GM12878 (cell line): ENCODE measurements at regions of chr6 and their contacts with region 1.

Region 1: GRCh38 chr6:136792410-136793262 is at the start of gene MAP3K5:
- DNase-seq: no peak
- ATAC-seq: peak; percentile 76
- H3K4me3 ChIP-seq: peak within 1 kb of the TSS; percentile 71
- H3K27ac ChIP-seq: peak within 1 kb of the TSS; percentile 98
- H3K4me1 ChIP-seq: peaks cover 6% of the 10 kb centered on the region
- H3K27me3 ChIP-seq: no peaks in the 10 kb centered on the region
- CTCF ChIP-seq: peak; percentile 79 to 91 (median 84)
- EP300 ChIP-seq: peak in 1 of 2 experiments; percentile 4; a peak in 1 of 4 replicates
- POLR2A ChIP-seq: peak; percentile 87
- RAD21 ChIP-seq: peak; percentile 98
- polyA plus RNA-seq, gene MAP3K5: 5.4 to 11.1 TPM

Region 2: GRCh38 chr6:136593748-136594490 is 198.7 kb before region 1 on chr6:
- CTCF ChIA-PET with region 1: interaction called, 14 read pairs
- POLR2A ChIA-PET with region 1: interaction called, 7 read pairs
- RAD21 ChIA-PET with region 1: interaction called, 21 read pairs
- SMC1A ChIA-PET with region 1: interaction called, 7 read pairs
- in situ Hi-C with region 1: no loop called
- intact Hi-C with region 1: loop called (anchors 5 kb)
- DNase-seq: peak; percentile 94
- ATAC-seq: peak; percentile 97
- H3K4me3 ChIP-seq: 0 out of 2 replicates have a peak overlapping the region, but pooled peaks have one; percentile 20
- H3K27ac ChIP-seq: peak overlapping the region; percentile 83
- H3K4me1 ChIP-seq: peaks cover 13% of the 10 kb centered on the region; the same call in 1 of the 2 replicates
- H3K27me3 ChIP-seq: no peaks in the 10 kb centered on the region
- CTCF ChIP-seq: no peak
- EP300 ChIP-seq: peak in 1 of 2 experiments; percentile 55; a peak in 2 of 4 replicates
- POLR2A ChIP-seq: 0 out of 2 replicates have a peak, but pooled peaks have one; percentile 39
- RAD21 ChIP-seq: no peak

Region 3: DNA sequence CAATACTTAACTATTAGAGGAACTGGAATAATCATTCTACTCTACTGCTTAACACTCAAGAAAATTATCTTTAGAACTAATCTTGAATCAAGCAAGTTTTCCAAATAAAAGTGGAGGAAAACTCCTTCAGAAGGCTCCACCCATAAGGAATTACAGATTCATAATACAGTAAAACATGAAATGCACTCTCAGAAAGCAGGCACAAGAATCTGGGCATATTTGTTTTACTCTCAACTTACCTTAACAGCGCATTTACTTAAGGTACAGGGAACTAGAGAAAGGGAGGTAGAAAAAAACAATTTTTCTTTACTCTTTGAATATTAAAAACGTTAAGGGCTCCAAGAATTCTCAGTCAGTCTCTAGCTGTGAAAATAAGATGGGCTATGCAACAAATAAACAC is 140.7 kb before region 1 on chr6:
- CTCF ChIA-PET with region 1: interaction called, 411 read pairs
- POLR2A ChIA-PET with region 1: interaction called, 3 read pairs
- RAD21 ChIA-PET with region 1: interaction called, 296 read pairs
- SMC1A ChIA-PET with region 1: interaction called, 275 read pairs
- in situ Hi-C with region 1: no loop called
- intact Hi-C with region 1: no loop called
- DNase-seq: no peak
- ATAC-seq: no peak
- H3K4me3 ChIP-seq: no peak overlapping the region
- H3K27ac ChIP-seq: no peak overlapping the region
- H3K4me1 ChIP-seq: no peaks in the 10 kb centered on the region
- H3K27me3 ChIP-seq: no peaks in the 10 kb centered on the region
- CTCF ChIP-seq: no peak
- EP300 ChIP-seq: no peak
- POLR2A ChIP-seq: no peak
- RAD21 ChIP-seq: no peak

Region 4: GRCh38 chr6:136696238-136696637 is 96.4 kb before region 1 on chr6:
- CTCF ChIA-PET with region 1: interaction called, 6 read pairs
- POLR2A ChIA-PET with region 1: interaction called, 5 read pairs
- RAD21 ChIA-PET with region 1: interaction called, 10 read pairs
- SMC1A ChIA-PET with region 1: interaction called, 4 read pairs
- in situ Hi-C with region 1: no loop called
- intact Hi-C with region 1: no loop called
- DNase-seq: no peak
- ATAC-seq: no peak
- H3K4me3 ChIP-seq: no peak overlapping the region
- H3K27ac ChIP-seq: no peak overlapping the region
- H3K4me1 ChIP-seq: no peaks in the 10 kb centered on the region
- H3K27me3 ChIP-seq: no peaks in the 10 kb centered on the region
- CTCF ChIP-seq: no peak
- EP300 ChIP-seq: no peak
- POLR2A ChIP-seq: no peak
- RAD21 ChIP-seq: no peak

Region 5: DNA sequence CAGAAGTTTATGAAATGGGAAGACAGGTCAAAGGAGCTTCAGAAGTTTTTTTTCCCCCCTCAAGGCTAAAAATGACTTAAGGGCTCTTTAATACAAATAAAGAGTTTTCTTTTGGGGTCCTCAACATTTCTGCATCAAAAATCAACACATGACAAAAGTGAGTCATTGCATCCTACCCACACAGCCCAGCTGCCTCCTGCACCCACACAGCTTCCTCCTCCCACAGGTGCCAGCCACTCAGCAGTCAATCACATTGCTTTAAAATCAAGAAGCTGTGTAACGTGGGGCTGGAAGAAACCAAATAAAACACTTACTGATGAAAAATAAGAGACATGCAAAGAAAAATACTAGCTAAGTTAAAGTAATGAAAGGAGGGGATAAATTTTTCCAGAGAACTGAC is 68.9 kb before region 1 on chr6:
- CTCF ChIA-PET with region 1: interaction called, 136 read pairs
- POLR2A ChIA-PET with region 1: interaction called, 265 read pairs
- RAD21 ChIA-PET with region 1: interaction called, 405 read pairs
- SMC1A ChIA-PET with region 1: interaction called, 446 read pairs
- in situ Hi-C with region 1: loop called (anchors 5 kb)
- intact Hi-C with region 1: loop called (anchors 1 kb)
- DNase-seq: peak; percentile 53
- ATAC-seq: peak; percentile 64
- H3K4me3 ChIP-seq: no peak overlapping the region
- H3K27ac ChIP-seq: peak overlapping the region; percentile 30
- H3K4me1 ChIP-seq: peaks cover 20% of the 10 kb centered on the region
- H3K27me3 ChIP-seq: no peaks in the 10 kb centered on the region
- CTCF ChIP-seq: no peak
- EP300 ChIP-seq: no peak
- POLR2A ChIP-seq: no peak
- RAD21 ChIP-seq: no peak

Region 6: DNA sequence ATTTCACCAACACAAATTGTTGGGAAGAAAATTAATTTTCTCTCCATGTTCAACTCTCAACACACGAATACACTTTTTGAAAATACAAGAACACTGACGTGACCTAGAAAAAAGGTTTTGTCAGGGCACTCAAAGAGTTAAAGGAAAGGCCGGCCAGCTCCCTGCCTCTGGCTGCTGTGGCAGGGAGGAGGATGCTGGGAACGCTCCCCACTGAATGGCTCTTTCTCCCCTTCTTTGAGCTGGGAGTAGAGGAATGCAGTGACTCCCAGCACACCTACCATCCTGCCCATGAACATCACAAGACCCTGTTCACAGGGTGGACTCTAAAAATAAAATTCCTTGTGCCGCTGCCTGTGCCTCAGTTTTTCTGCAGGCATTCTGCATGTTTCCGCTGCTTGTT is 47.3 kb before region 1 on chr6:
- CTCF ChIA-PET with region 1: interaction called, 34 read pairs
- POLR2A ChIA-PET with region 1: interaction called, 5 read pairs
- RAD21 ChIA-PET with region 1: interaction called, 56 read pairs
- SMC1A ChIA-PET with region 1: interaction called, 48 read pairs
- in situ Hi-C with region 1: no loop called
- intact Hi-C with region 1: no loop called
- DNase-seq: no peak
- ATAC-seq: no peak
- H3K4me3 ChIP-seq: no peak overlapping the region
- H3K27ac ChIP-seq: no peak overlapping the region
- H3K4me1 ChIP-seq: peaks cover 24% of the 10 kb centered on the region
- H3K27me3 ChIP-seq: no peaks in the 10 kb centered on the region
- CTCF ChIP-seq: no peak
- EP300 ChIP-seq: no peak
- POLR2A ChIP-seq: no peak
- RAD21 ChIP-seq: no peak

Region 7: GRCh38 chr6:136772685-136773472 is 19.8 kb before region 1 on chr6:
- CTCF ChIA-PET with region 1: interaction called, 26 read pairs
- POLR2A ChIA-PET with region 1: interaction called, 159 read pairs
- RAD21 ChIA-PET with region 1: interaction called, 270 read pairs
- SMC1A ChIA-PET with region 1: interaction called, 227 read pairs
- in situ Hi-C with region 1: no loop called
- intact Hi-C with region 1: loop called (anchors 1 kb)
- DNase-seq: peak; percentile 93
- ATAC-seq: peak; percentile 75
- H3K4me3 ChIP-seq: peak overlapping the region; percentile 49
- H3K27ac ChIP-seq: peak overlapping the region; percentile 92
- H3K4me1 ChIP-seq: peaks cover 57% of the 10 kb centered on the region
- H3K27me3 ChIP-seq: no peaks in the 10 kb centered on the region
- CTCF ChIP-seq: no peak
- EP300 ChIP-seq: peak; percentile 50 to 93; a peak in 3 of 4 replicates
- POLR2A ChIP-seq: peak; percentile 38; the same call in 1 of the 2 replicates
- RAD21 ChIP-seq: no peak; the same call in 1 of the 2 replicates

Region 8: GRCh38 chr6:136930528-136930927 is 137.9 kb after region 1 on chr6:
- CTCF ChIA-PET with region 1: no interaction called
- POLR2A ChIA-PET with region 1: no interaction called
- RAD21 ChIA-PET with region 1: no interaction called
- SMC1A ChIA-PET with region 1: no interaction called
- in situ Hi-C with region 1: no loop called
- intact Hi-C with region 1: no loop called
- DNase-seq: no peak
- ATAC-seq: no peak
- H3K4me3 ChIP-seq: no peak overlapping the region
- H3K27ac ChIP-seq: no peak overlapping the region
- H3K4me1 ChIP-seq: no peaks in the 10 kb centered on the region
- H3K27me3 ChIP-seq: no peaks in the 10 kb centered on the region
- CTCF ChIP-seq: no peak
- EP300 ChIP-seq: no peak
- POLR2A ChIP-seq: no peak
- RAD21 ChIP-seq: no peak